Calu3 (cell line): ENCODE measurements at regions of chr1 and their contacts with region 1.

Region 1: DNA sequence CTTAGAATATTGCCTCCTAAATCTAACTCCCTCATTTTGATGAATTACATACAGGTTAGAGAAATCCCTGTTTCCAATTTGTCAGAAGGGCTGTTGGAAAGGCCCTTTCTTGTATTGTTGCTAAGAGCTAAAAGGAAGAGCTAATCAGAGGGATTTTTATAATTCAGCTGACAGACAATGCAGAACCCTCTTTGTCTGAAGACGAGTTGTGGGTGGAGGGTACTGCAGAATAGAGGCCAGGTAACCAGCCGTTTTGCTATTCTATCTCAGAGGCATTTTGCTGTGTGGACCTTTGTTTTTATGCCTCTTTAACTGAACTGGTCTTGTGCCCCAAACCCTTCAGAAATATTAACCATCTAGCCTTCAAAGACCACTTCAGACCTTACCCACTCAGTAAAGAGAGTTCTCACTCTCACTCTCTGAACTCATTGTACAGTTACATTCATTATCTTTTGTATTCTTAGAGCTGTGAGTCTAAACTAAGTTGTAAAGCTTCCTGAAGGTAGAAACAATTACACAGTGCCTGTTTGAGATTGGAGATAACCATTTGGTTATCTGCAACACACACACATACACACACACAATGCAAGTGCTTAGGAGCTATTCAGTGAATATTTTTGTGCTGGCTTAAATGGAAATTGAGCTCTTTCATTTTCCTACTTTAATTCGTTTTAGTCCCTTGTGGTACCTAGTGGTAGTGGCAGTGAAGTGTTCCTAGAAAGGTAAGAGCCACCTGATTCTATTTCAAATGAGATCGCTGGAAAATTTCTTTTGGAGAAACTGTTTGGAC is 19.7 kb downstream of the KPNA6 start:
- DNase-seq: no peak
- H3K4me3 Mint-ChIP-seq: no peak overlapping the region
- H3K27ac Mint-ChIP-seq: no peak overlapping the region
- H3K4me1 Mint-ChIP-seq: peaks cover 6% of the 10 kb centered on the region
- H3K27me3 Mint-ChIP-seq: no peaks in the 10 kb centered on the region
- CTCF ChIP-seq: no peak

Region 2: DNA sequence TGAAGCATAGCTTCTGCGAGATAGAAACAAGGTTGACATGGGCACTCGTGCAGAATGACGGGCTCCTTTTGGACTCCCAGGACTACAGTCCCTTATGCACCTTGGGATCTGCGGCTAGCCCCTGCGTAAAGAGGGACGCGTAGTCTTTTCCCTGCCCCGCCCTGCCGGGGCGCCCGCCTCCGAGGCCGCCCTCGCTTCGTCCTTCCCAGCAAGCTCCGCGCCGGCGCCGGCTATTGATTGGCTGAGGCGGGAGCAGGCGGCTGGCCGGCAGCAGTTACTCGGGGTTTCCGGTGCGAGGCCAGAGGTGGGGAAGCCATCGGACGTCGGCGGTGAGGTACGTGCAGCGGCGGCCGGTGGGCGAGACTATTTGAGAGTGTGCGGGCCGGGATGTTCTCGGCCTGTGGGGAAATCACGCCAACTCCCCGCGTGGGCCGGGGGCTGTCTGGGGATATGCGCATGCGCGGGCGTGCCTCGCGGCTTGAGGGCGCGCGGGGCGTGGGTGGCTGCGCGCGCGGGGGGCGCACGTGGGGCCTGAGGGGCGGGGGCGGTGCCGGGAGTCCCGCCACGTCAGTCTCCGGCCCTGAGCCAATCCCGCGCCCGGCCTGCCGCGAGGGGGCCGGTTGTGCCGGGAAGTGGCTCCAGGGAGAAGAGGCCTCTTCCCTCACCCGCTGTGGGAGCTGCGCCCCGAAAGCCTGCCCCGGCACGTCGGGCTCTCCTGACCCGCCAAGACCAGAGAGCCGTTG is 52.0 kb after region 1 on chr1 and contains the start of gene TXLNA:
- CTCF ChIA-PET with region 1: interaction called, 11 read pairs
- intact Hi-C with region 1: no loop called
- DNase-seq: peak; percentile 93
- H3K4me3 Mint-ChIP-seq: peak within 1 kb of the TSS; percentile 95
- H3K27ac Mint-ChIP-seq: peak within 1 kb of the TSS; percentile 96
- H3K4me1 Mint-ChIP-seq: peaks cover 23% of the 10 kb centered on the region
- H3K27me3 Mint-ChIP-seq: no peaks in the 10 kb centered on the region
- CTCF ChIP-seq: no peak
- total RNA-seq, gene TXLNA: 58.4 and 62.4 TPM in 2 replicates

Region 3: DNA sequence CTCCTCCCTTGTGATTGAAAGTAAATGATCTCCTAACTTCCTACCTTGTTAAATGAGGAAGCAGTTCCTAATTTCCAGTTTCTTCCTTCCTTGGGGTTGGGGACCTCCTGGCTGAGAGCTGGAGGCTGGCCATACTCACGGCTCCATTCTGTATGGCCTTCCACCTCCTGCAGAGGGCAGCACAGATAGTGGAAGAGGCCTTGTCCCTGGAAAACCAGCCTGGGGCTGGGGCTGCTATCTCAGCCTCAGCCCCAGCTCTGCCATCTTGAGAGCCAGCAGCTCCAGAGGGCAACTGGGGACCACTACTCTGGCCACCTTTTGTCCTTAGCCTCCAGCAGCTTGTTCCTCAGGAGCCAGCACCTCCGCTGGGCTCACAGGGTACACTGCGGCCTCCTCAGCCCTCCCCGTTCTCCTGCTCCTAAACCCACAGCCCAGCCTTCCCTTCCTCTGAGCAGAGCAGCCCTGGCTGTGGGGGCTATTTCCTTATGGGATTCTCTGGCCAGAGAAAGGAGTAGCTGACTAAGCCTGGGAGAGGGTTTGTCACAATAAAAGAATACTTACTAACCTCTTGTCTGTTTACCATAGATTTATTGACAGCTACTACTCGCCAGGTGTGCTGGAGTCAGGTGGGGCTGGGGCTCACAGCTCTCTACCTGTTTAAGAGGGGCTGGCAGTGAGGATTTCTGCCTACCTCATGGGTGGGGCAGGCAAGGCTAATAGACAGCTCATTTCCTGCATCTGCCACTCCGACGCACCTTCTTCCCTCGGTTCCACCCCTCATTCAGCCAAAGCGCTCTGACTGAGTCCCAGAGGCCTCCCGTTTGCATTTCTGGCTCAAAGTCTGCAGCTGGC is 88.3 kb after region 1 on chr1:
- CTCF ChIA-PET with region 1: no interaction called
- intact Hi-C with region 1: no loop called
- DNase-seq: peak; percentile 74
- H3K4me3 Mint-ChIP-seq: no peak overlapping the region
- H3K27ac Mint-ChIP-seq: no peak overlapping the region
- H3K4me1 Mint-ChIP-seq: peaks cover 5% of the 10 kb centered on the region
- H3K27me3 Mint-ChIP-seq: no peaks in the 10 kb centered on the region
- CTCF ChIP-seq: peak; percentile 68